ENCODE measurements at regions of chr22 and their contacts with region 1.

Region 1: DNA sequence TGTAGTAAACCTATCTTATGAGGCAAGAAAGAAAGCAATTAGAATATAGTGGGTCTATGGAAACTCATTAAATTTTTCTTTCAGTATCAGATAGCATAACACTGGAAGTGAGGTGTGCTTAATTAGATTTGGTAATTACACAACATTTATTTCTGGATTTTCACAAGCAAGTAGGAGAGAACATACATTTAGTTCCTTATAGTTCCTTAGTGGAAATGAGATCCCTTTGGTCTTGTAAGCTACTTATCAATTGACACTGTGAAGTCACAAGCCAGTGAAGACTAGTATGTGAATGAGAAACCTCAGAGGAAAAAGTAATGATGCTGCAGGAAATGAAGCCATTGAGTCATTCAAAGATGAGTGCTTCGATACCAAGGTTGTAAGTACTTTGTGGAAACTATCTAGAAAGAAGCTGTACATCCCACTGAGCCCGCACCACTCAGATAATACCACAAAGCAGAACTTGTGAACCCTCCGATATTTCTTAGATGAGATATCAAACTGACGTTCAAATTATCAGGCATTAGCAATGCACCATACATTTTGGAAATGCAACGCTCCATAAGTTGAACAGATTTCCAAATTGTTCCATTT is 53.5 kb downstream of the ENTHD1 start:
- DNase-seq: peak; percentile 13
- H3K4me3 Mint-ChIP-seq: no peak overlapping the region
- H3K27ac Mint-ChIP-seq: peak overlapping the region; percentile 51
- H3K4me1 Mint-ChIP-seq: peaks cover 16% of the 10 kb centered on the region
- H3K27me3 Mint-ChIP-seq: peaks cover 22% of the 10 kb centered on the region

Region 2: GRCh38 chr22:39748877-39749276 is 91.1 kb before region 1 on chr22:
- intact Hi-C with region 1: loop called (anchors 5 kb)
- DNase-seq: no peak
- H3K4me3 Mint-ChIP-seq: no peak overlapping the region
- H3K27ac Mint-ChIP-seq: no peak overlapping the region
- H3K4me1 Mint-ChIP-seq: peaks cover 50% of the 10 kb centered on the region
- H3K27me3 Mint-ChIP-seq: peaks cover 2% of the 10 kb centered on the region

Region 3: DNA sequence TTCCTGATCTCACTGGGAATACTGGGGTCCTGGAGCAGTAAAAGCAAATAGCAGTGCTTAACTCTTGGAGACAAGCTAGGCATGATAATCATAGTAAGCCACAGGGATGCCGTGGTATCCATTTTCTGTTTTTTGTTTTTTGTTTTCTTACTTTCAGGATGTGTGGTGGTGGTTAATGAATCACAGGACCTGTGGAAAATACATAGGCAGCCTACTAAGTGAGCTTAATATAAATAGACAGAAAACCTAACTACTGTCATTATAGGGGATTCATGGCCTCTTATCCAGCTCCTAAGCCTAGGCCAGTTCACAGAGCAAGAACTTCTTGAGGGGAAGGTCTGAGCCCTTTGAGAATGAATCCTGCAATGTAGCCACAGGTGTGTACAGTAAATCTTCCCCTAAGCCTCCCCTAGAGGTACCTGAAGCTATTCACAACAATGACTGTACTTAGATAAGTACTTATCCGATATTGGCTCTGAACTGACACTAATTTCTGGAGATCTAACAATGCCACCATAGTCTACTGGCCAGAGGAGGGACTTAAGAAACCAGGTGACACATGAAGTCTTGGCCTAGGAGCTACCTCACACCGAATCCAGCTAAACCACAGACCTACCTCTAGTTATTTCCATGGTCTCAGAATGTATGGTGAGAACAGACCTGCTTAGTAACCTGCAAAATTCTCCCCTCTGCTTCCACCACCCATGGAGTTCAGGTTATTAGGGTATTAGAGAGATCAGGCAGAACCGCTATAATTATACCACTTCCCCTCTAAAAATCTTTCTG is 30.0 kb before region 1 on chr22:
- intact Hi-C with region 1: loop called (anchors 1 kb)
- DNase-seq: no peak
- H3K4me3 Mint-ChIP-seq: peak overlapping the region; percentile 3
- H3K27ac Mint-ChIP-seq: peak overlapping the region; percentile 71
- H3K4me1 Mint-ChIP-seq: peaks cover 34% of the 10 kb centered on the region
- H3K27me3 Mint-ChIP-seq: no peaks in the 10 kb centered on the region

Region 4: GRCh38 chr22:39825661-39826102 is 14.3 kb before region 1 on chr22:
- intact Hi-C with region 1: loop called (anchors 2 kb)
- DNase-seq: no peak
- H3K4me3 Mint-ChIP-seq: no peak overlapping the region
- H3K27ac Mint-ChIP-seq: no peak overlapping the region
- H3K4me1 Mint-ChIP-seq: peaks cover 12% of the 10 kb centered on the region
- H3K27me3 Mint-ChIP-seq: peaks cover 21% of the 10 kb centered on the region

Region 5: DNA sequence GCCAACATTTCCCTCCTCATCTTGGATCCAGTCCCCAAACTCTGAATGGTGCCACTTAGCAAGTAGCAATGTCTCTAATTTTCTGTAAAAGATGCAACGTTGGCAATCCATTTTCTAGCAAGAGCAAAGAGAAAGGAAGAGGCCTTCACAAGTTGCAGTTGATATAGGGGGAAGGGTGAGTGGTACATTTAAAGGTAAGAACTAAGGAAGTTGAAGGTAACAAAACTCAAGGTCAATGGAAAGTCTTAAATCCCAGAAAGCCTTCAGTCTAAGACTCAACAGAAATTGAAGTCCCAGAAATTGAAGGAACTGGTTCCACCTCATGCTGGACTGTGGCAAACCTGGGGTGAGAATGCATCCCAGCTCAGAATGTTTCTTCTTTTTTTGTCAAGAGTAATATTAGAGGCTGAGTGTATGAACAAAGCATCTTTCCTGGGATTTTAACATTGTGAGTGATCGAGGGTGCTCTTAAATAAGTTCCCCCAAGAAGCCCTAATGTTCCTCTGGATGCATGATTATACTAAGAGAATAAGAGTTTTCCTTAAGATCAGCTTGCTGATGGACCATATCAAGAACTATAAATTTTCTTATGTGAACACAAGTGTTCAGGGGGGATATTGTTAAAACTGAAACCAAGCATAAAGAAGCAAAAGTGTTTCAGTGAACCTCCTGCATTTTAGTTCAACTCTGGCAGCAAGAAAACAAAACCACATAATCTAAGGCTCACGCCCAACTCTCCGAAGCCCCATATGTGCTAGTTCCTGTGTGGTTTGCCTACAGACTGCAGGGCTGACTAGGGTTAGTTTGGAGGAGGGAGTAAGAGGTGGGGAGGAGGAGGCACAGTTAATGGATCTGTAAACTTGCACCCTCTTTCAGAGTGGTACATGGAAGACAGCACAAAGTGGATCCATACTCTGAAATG is 60.6 kb after region 1 on chr22 and contains the start of gene GRAP2:
- intact Hi-C with region 1: loop called (anchors 2 kb)
- DNase-seq: peak; percentile 77
- H3K4me3 Mint-ChIP-seq: peak within 1 kb of the TSS; percentile 93
- H3K27ac Mint-ChIP-seq: peak within 1 kb of the TSS; percentile 95
- H3K4me1 Mint-ChIP-seq: peaks cover 47% of the 10 kb centered on the region
- H3K27me3 Mint-ChIP-seq: no peaks in the 10 kb centered on the region
- total RNA-seq, gene GRAP2: 30.5 and 31.3 TPM in 2 replicates

Region 6: GRCh38 chr22:39908737-39909136 is 68.7 kb after region 1 on chr22:
- intact Hi-C with region 1: loop called (anchors 1 kb)
- DNase-seq: no peak
- H3K4me3 Mint-ChIP-seq: peak overlapping the region; percentile 92
- H3K27ac Mint-ChIP-seq: peak overlapping the region; percentile 96
- H3K4me1 Mint-ChIP-seq: peaks cover 95% of the 10 kb centered on the region
- H3K27me3 Mint-ChIP-seq: no peaks in the 10 kb centered on the region

Region 7: GRCh38 chr22:39960791-39961746 is 121.1 kb after region 1 on chr22:
- intact Hi-C with region 1: loop called (anchors 1 kb)
- DNase-seq: peak; percentile 71
- H3K4me3 Mint-ChIP-seq: peak overlapping the region; percentile 73
- H3K27ac Mint-ChIP-seq: peak overlapping the region; percentile 92
- H3K4me1 Mint-ChIP-seq: peaks cover 54% of the 10 kb centered on the region
- H3K27me3 Mint-ChIP-seq: no peaks in the 10 kb centered on the region

Measured in activated T-helper 1 cell treated with anti-CD3 and anti-CD28 coated beads, Interleukin-12 subunit alpha, Interleukin-12 subunit beta, Interleukin-2, Interleukin-4 antibody, amounts not matched to agents 30 ng/mL and 10 ng/mL and 1 ng/mL, durations not matched to agents 14 hours and 24 hours and 36 hours (primary cell).